Activated CD4-positive, alpha-beta T cell treated with anti-CD3 and anti-CD28 coated beads for 36 hours (primary cell): ENCODE measurements at regions of chr1 and their contacts with region 1.

Region 1: GRCh38 chr1:167936068-167936929 is at the start of gene DCAF6:
- DNase-seq: peak; percentile 97
- ATAC-seq: peak; percentile 84
- H3K4me3 Mint-ChIP-seq: peak within 1 kb of the TSS; percentile 89
- H3K27ac Mint-ChIP-seq: peak within 1 kb of the TSS; percentile 97
- H3K4me1 Mint-ChIP-seq: peaks cover 34% of the 10 kb centered on the region
- H3K27me3 Mint-ChIP-seq: no peaks in the 10 kb centered on the region
- total RNA-seq, gene DCAF6: 25.6 to 28.8 TPM

Region 2: DNA sequence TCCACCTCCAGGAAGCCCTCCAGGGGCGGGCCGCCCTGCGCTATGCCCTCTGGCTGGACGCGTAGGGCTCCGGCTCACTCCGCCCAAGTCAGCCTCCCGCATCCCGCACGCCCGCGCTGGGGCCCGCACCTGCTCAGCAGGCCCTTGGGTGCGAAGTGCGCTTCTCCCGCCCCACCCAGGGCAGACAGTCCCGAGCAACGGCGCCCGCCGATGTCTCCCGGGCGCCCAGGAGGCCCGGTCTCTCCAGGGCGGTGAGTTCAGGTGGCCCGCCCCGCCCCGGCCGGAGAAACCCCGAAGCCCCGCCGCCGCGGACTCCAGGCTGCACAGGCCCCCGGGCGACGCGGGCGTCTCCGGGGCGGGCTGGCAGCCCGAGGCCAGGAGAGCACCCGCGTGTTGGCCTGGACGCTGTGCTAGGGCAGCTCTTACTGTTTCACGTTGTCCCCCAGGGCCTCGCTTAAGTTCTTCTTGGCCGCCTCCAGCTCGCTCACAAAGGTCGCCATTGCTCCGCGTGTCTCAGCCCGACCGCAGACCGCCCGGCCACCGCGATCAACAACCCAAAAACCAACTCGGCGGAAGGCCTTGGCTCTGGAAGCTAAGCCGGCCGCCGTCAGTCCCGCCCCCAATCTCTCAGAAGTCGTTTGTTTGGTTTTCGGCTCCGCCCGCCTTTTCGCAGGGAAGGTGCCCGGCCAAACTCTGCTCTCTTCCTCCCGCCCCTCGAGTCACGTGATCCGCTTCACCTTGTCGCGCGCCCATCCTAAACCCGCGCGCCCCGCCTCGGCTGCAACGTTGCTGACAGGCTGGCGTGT is 1060.4 kb before region 1 on chr1 and contains the start of gene TADA1:
- CTCF ChIA-PET with region 1: no interaction called
- POLR2A ChIA-PET with region 1: no interaction called
- intact Hi-C with region 1: loop called in 1 of 2 experiments (anchors 2 kb)
- DNase-seq: peak; percentile 100
- ATAC-seq: peak; percentile 91
- H3K4me3 Mint-ChIP-seq: peak within 1 kb of the TSS; percentile 92
- H3K27ac Mint-ChIP-seq: peak within 1 kb of the TSS; percentile 97
- H3K4me1 Mint-ChIP-seq: peaks cover 45% of the 10 kb centered on the region
- H3K27me3 Mint-ChIP-seq: no peaks in the 10 kb centered on the region
- total RNA-seq, gene TADA1: 16.0 to 19.5 TPM

Region 3: DNA sequence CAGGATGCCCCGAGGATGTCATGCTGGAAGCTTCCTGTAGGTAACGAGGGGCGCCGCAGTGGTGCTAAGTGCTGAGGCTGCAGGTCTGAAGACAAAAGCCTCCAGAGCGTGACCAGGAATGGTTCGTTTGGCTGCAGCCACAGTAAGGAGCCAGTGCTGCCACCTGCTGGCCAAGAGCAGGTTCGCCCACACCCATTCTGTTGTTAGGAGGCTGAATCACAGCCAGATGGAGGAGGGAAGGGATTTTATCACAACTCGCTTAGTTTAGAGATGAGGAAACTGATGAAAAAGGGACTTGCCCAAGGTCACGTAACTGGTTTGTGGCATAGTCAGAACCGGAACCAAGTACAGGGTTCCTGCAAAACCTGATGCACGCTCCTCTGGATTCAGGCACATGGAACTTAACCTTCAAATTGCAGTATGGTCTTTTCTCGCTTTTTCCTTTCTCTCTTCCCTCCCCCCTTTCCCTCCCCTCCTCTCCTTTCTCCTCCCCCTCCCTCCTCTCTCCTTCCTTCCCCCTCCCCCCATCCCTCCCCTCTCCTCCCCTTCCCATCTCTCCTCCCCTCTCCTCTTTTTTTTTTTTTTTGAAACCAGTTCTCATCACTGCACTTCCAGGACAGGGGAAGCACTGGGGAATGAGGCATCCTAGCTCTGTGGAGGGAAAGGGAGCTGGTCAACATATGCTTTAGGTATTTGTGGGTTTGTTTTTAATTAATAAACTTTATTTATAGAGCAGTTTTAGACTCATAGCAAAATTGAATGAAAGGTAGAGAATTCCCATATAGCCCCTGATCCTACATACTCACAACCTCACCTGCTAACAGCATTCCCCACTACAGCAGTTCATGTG is 132.7 kb before region 1 on chr1:
- CTCF ChIA-PET with region 1: no interaction called
- POLR2A ChIA-PET with region 1: no interaction called
- intact Hi-C with region 1: loop called (anchors 1 to 5 kb)
- DNase-seq: peak; percentile 96
- ATAC-seq: peak; percentile 94
- H3K4me3 Mint-ChIP-seq: peak overlapping the region; percentile 64
- H3K27ac Mint-ChIP-seq: peak overlapping the region; percentile 97
- H3K4me1 Mint-ChIP-seq: peaks cover 24% of the 10 kb centered on the region
- H3K27me3 Mint-ChIP-seq: peaks cover under 1% of the 10 kb centered on the region

Region 4: GRCh38 chr1:168045311-168045710 is 109.0 kb after region 1 on chr1:
- CTCF ChIA-PET with region 1: no interaction called
- POLR2A ChIA-PET with region 1: no interaction called
- intact Hi-C with region 1: no loop called
- DNase-seq: no peak
- ATAC-seq: no peak
- H3K4me3 Mint-ChIP-seq: no peak overlapping the region
- H3K27ac Mint-ChIP-seq: no peak overlapping the region
- H3K4me1 Mint-ChIP-seq: no peaks in the 10 kb centered on the region
- H3K27me3 Mint-ChIP-seq: no peaks in the 10 kb centered on the region

Region 5: DNA sequence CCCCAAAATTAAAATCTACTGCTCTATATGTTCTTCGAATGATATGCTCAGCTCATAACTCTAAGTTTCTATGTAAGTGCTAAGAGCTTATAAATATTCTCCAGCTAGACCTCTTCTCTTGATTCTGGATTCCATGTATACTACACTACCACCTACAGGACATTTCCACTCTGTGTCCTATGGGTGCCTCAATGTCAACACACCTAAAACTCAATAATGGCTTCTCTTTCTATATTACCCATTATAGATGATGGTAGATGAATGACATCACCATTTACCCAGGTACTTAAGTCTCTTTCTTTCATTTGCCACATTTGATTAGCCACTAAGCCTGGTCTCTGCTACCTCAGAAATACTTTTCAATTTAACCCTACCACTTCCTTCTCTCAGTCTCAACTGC is 385.6 kb after region 1 on chr1:
- CTCF ChIA-PET with region 1: no interaction called
- POLR2A ChIA-PET with region 1: interaction called, 14 read pairs
- intact Hi-C with region 1: no loop called
- DNase-seq: no peak
- ATAC-seq: peak; percentile 78
- H3K4me3 Mint-ChIP-seq: no peak overlapping the region
- H3K27ac Mint-ChIP-seq: no peak overlapping the region
- H3K4me1 Mint-ChIP-seq: peaks cover 13% of the 10 kb centered on the region
- H3K27me3 Mint-ChIP-seq: no peaks in the 10 kb centered on the region